CD8-positive, alpha-beta T cell (primary cell): ENCODE measurements at regions of chr3 and their contacts with region 1.

Region 1: DNA sequence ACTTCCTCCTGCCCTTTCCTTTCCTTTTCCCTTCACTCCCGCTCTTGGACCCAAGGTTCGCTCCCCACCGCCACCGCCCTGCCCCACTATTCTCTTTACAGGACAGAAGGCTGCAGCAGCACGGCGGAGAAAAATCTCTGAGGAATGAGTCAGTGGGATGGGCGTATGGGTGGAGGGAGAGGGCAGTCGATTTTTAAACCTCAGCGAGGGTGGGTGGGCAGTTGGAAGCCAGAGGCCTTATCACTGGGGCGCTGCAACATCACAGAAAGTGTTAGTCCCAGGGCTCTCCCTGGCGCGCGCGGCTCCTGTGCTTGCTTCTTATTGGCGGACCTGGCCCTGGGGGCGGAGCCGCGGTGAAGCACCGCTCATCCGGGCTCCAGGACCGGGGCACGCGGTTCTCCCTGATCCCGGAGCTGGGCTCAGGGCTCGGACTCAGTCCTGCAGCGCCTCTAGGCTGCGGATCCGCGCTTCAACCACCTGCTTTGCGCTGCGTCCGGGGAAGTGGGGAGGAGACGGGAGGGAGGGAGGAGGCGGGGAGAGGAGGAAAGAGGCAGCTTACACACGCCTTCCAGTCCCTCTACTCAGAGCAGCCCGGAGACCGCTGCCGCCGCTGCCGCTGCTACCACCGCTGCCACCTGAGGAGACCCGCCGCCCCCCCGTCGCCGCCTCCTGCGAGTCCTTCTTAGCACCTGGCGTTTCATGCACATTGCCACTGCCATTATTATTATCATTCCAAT is at the start of gene ALCAM:
- DNase-seq: peak; percentile 57 to 88 (median 75)
- ATAC-seq: peak; percentile 60
- H3K4me3 ChIP-seq: peak within 1 kb of the TSS; percentile 57 to 66
- H3K4me3 Mint-ChIP-seq: peak within 1 kb of the TSS; percentile 89
- H3K27ac ChIP-seq: peak within 1 kb of the TSS; percentile 63 to 85
- H3K27ac Mint-ChIP-seq: peak within 1 kb of the TSS; percentile 93
- H3K4me1 ChIP-seq: peaks cover 20% of the 10 kb centered on the region
- H3K4me1 Mint-ChIP-seq: peaks cover 32% of the 10 kb centered on the region
- H3K27me3 ChIP-seq: peaks cover 4 to 6% of the 10 kb centered on the region in 2 experiments
- H3K27me3 Mint-ChIP-seq: peaks cover 7% of the 10 kb centered on the region
- CTCF ChIP-seq: no peak
- total RNA-seq, gene ALCAM: 2.9 TPM

Region 2: DNA sequence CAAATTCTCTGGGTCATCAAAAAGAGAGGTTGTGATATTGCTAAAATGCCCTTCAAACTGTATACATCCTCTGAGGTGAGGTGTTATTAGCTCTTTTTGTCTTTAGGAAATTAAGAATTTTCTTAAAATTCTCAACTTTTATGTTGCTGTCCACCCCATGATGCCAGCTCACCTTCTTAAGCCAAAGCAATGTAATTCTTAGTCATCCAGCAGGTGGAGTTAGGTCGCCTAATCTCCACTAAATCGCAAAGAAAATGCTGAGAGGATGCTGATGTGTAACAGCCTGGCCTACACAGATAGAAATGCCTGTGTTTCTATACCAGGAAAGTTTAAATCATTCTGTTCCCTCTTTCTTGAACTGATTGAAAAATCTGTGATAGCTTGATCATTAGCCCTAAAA is 769.9 kb before region 1 on chr3:
- CTCF ChIA-PET with region 1: interaction called, 4 read pairs
- POLR2A ChIA-PET with region 1: no interaction called
- intact Hi-C with region 1: loop called (anchors 2 to 5 kb)
- DNase-seq: peak in 2 of 9 experiments; percentile 34 to 41
- ATAC-seq: no peak
- H3K4me3 ChIP-seq: no peak overlapping the region
- H3K4me3 Mint-ChIP-seq: no peak overlapping the region
- H3K27ac ChIP-seq: no peak overlapping the region
- H3K27ac Mint-ChIP-seq: no peak overlapping the region
- H3K4me1 ChIP-seq: no peaks in the 10 kb centered on the region
- H3K4me1 Mint-ChIP-seq: no peaks in the 10 kb centered on the region
- H3K27me3 ChIP-seq: no peaks in the 10 kb centered on the region
- H3K27me3 Mint-ChIP-seq: no peaks in the 10 kb centered on the region
- CTCF ChIP-seq: peak; percentile 17

Region 3: GRCh38 chr3:105353485-105354161 is 12.9 kb before region 1 on chr3:
- CTCF ChIA-PET with region 1: interaction called, 11 read pairs
- POLR2A ChIA-PET with region 1: interaction called, 3 read pairs
- intact Hi-C with region 1: loop called in 1 of 2 experiments (anchors 2 kb)
- DNase-seq: no peak
- ATAC-seq: no peak
- H3K4me3 ChIP-seq: no peak overlapping the region
- H3K4me3 Mint-ChIP-seq: no peak overlapping the region
- H3K27ac ChIP-seq: no peak overlapping the region
- H3K27ac Mint-ChIP-seq: no peak overlapping the region
- H3K4me1 ChIP-seq: no peaks in the 10 kb centered on the region
- H3K4me1 Mint-ChIP-seq: peaks cover 5% of the 10 kb centered on the region
- H3K27me3 ChIP-seq: peaks cover 0 to 4% of the 10 kb centered on the region in 2 experiments
- H3K27me3 Mint-ChIP-seq: peaks cover 48% of the 10 kb centered on the region
- CTCF ChIP-seq: no peak

Region 4: GRCh38 chr3:105402287-105402801 is 35.9 kb after region 1 on chr3:
- CTCF ChIA-PET with region 1: no interaction called
- POLR2A ChIA-PET with region 1: no interaction called
- intact Hi-C with region 1: no loop called
- DNase-seq: no peak
- ATAC-seq: no peak
- H3K4me3 ChIP-seq: no peak overlapping the region
- H3K4me3 Mint-ChIP-seq: no peak overlapping the region
- H3K27ac ChIP-seq: no peak overlapping the region
- H3K27ac Mint-ChIP-seq: no peak overlapping the region
- H3K4me1 ChIP-seq: no peaks in the 10 kb centered on the region
- H3K4me1 Mint-ChIP-seq: no peaks in the 10 kb centered on the region
- H3K27me3 ChIP-seq: no peaks in the 10 kb centered on the region
- H3K27me3 Mint-ChIP-seq: peaks cover 10% of the 10 kb centered on the region
- CTCF ChIP-seq: no peak

Region 5: DNA sequence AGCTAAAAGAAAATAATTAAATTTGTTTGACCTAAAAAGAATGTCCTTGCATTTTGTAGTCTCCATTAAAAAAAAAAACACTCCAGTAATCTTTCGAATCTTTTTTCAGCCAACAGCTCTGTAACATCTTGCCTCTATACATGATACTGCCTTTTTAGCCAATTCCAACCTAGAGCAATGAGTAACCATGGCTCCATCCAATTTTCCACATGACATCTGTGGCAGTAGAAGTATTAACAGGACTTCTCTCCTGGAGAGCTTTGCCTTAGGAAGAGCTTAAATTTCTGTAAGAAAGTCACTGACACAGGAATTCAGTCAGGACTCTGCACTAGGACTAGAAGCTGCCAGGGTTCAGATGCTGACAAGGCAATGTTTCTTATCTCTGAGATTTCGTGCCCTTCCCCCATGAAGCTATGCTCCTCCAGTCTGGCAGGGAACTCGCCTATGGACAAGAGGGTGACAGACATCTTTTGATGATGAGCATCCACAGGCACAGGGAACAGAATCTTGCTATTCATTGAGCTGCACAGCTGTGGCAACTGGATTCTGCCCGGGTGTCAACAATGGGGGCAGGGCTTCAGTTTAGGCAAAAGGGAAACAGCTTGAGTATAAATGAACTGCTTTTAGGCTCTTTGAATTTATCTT is 82.0 kb after region 1 on chr3:
- CTCF ChIA-PET with region 1: no interaction called
- POLR2A ChIA-PET with region 1: no interaction called
- intact Hi-C with region 1: no loop called
- DNase-seq: no peak
- ATAC-seq: no peak
- H3K4me3 ChIP-seq: no peak overlapping the region
- H3K4me3 Mint-ChIP-seq: no peak overlapping the region
- H3K27ac ChIP-seq: no peak overlapping the region
- H3K27ac Mint-ChIP-seq: no peak overlapping the region
- H3K4me1 ChIP-seq: no peaks in the 10 kb centered on the region
- H3K4me1 Mint-ChIP-seq: no peaks in the 10 kb centered on the region
- H3K27me3 ChIP-seq: no peaks in the 10 kb centered on the region
- H3K27me3 Mint-ChIP-seq: no peaks in the 10 kb centered on the region
- CTCF ChIP-seq: no peak

Region 6: DNA sequence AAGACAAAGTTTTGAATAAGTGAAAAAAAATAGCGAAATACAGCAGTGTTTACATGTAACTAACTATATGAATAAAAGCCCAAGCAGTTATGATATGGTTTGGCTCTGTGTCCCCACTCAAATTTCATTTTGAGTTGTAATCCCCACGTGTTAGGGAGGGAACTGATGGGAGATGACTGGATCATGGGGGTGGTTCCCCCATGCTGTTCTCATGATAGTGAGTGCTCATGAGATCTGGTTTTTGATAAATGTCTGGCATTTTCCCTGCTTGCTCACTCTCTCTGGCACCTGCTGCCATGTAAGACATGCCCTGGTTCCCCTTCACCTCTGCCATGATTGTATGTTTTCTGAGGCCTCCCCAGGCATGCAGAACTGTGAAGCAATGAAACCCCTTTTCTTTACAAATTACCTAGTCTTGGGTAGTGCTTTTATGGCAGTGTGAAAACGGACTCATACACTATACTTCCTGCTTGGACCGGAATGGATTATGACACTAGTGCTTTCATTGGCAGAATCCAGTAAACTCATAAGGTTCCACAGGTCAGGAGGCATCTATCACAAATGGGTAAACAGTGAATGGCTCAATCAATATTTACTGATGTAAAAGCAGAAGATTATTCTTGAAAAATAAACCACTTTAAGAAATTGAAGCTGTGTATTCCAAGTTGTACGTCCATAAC is 310.3 kb after region 1 on chr3:
- CTCF ChIA-PET with region 1: no interaction called
- POLR2A ChIA-PET with region 1: no interaction called
- intact Hi-C with region 1: no loop called
- DNase-seq: no peak
- ATAC-seq: no peak
- H3K4me3 ChIP-seq: no peak overlapping the region
- H3K4me3 Mint-ChIP-seq: no peak overlapping the region
- H3K27ac ChIP-seq: no peak overlapping the region
- H3K27ac Mint-ChIP-seq: no peak overlapping the region
- H3K4me1 ChIP-seq: no peaks in the 10 kb centered on the region
- H3K4me1 Mint-ChIP-seq: peaks cover 9% of the 10 kb centered on the region
- H3K27me3 ChIP-seq: no peaks in the 10 kb centered on the region
- H3K27me3 Mint-ChIP-seq: no peaks in the 10 kb centered on the region
- CTCF ChIP-seq: no peak

Region 7: GRCh38 chr3:105747060-105747541 is 380.6 kb after region 1 on chr3:
- CTCF ChIA-PET with region 1: no interaction called
- POLR2A ChIA-PET with region 1: no interaction called
- intact Hi-C with region 1: loop called in 1 of 2 experiments (anchors 5 kb)
- DNase-seq: peak in 2 of 9 experiments; percentile 69 to 86
- ATAC-seq: peak; percentile 85
- H3K4me3 ChIP-seq: no peak overlapping the region
- H3K4me3 Mint-ChIP-seq: peak overlapping the region; percentile 71
- H3K27ac ChIP-seq: peak overlapping the region in 1 of 2 experiments; percentile 85
- H3K27ac Mint-ChIP-seq: peak overlapping the region; percentile 86
- H3K4me1 ChIP-seq: peaks cover 82% of the 10 kb centered on the region
- H3K4me1 Mint-ChIP-seq: peaks cover 75% of the 10 kb centered on the region
- H3K27me3 ChIP-seq: no peaks in the 10 kb centered on the region
- H3K27me3 Mint-ChIP-seq: no peaks in the 10 kb centered on the region
- CTCF ChIP-seq: no peak

Region 8: GRCh38 chr3:106609666-106610301 is 1243.3 kb after region 1 on chr3:
- CTCF ChIA-PET with region 1: no interaction called
- POLR2A ChIA-PET with region 1: no interaction called
- intact Hi-C with region 1: loop called in 1 of 2 experiments (anchors 5 kb)
- DNase-seq: peak; percentile 37 to 81 (median 56)
- ATAC-seq: peak; percentile 76
- H3K4me3 ChIP-seq: no peak overlapping the region
- H3K4me3 Mint-ChIP-seq: no peak overlapping the region
- H3K27ac ChIP-seq: no peak overlapping the region
- H3K27ac Mint-ChIP-seq: no peak overlapping the region
- H3K4me1 ChIP-seq: no peaks in the 10 kb centered on the region
- H3K4me1 Mint-ChIP-seq: peaks cover 4% of the 10 kb centered on the region
- H3K27me3 ChIP-seq: no peaks in the 10 kb centered on the region
- H3K27me3 Mint-ChIP-seq: no peaks in the 10 kb centered on the region
- CTCF ChIP-seq: peak; percentile 88